ENCODE measurements at regions of chr3 and their contacts with region 1.

Region 1: DNA sequence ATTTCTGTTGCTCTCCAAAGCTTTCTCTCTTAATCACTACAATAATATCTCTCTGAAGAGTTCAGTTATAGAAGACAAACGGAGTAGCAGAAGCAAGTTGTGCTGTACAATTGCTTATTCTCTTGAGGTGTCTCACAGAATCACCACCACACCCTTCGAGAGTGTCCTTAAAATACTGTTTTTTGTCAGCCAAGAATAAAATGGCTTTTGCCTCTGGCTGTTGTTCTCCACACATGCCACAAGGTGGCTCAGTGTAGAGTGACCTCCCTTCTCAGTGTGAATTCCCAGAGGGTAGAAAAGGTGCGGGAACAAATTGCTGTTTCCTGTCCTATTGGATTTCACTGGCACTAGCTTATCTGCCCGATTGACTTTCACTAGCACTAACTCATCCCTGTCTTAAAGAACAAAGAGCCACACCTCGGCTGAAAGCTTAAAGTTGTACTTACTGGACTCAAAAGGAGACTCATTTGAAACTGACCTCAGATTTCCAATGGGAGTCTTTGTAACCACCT is 134.2 kb upstream of the SATB1 start:
- DNase-seq: peak; percentile 51
- H3K4me3 Mint-ChIP-seq: peak overlapping the region; percentile 14
- H3K27ac Mint-ChIP-seq: peak overlapping the region; percentile 93
- H3K4me1 Mint-ChIP-seq: peaks cover 80% of the 10 kb centered on the region
- H3K27me3 Mint-ChIP-seq: no peaks in the 10 kb centered on the region

Region 2: DNA sequence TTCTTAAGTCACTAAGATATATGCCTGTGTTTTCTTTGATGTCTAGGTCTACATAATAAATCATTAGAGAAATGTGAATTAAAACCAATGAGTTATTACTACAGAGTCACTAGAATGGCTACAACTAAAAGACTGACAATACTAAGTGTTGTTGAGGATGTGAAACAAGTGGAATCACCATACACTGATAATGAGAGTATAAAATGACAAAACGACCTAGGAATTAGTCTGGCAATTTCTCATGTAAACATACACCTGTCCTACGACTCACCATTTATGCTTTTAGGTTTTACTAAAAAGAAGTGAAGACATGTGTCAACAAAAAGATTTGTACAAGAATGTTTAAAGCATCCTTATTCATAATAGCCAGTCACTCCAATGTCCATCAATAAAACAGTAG is 59.1 kb before region 1 on chr3:
- CTCF ChIA-PET with region 1: interaction called, 3 read pairs
- POLR2A ChIA-PET with region 1: no interaction called
- intact Hi-C with region 1: loop called (anchors 1 kb)
- DNase-seq: no peak
- H3K4me3 Mint-ChIP-seq: no peak overlapping the region
- H3K27ac Mint-ChIP-seq: no peak overlapping the region
- H3K4me1 Mint-ChIP-seq: peaks cover 37% of the 10 kb centered on the region
- H3K27me3 Mint-ChIP-seq: no peaks in the 10 kb centered on the region

Region 3: GRCh38 chr3:18633020-18633419 is 73.6 kb after region 1 on chr3:
- CTCF ChIA-PET with region 1: no interaction called
- POLR2A ChIA-PET with region 1: no interaction called
- intact Hi-C with region 1: no loop called
- DNase-seq: no peak
- H3K4me3 Mint-ChIP-seq: no peak overlapping the region
- H3K27ac Mint-ChIP-seq: no peak overlapping the region
- H3K4me1 Mint-ChIP-seq: peaks cover 5% of the 10 kb centered on the region
- H3K27me3 Mint-ChIP-seq: no peaks in the 10 kb centered on the region

Region 4: GRCh38 chr3:18649666-18650363 is 90.4 kb after region 1 on chr3:
- CTCF ChIA-PET with region 1: interaction called, 16 read pairs
- POLR2A ChIA-PET with region 1: interaction called, 25 read pairs
- intact Hi-C with region 1: loop called (anchors 1 kb)
- DNase-seq: peak; percentile 76
- H3K4me3 Mint-ChIP-seq: peak overlapping the region; percentile 30
- H3K27ac Mint-ChIP-seq: peak overlapping the region; percentile 98
- H3K4me1 Mint-ChIP-seq: peaks cover 89% of the 10 kb centered on the region
- H3K27me3 Mint-ChIP-seq: no peaks in the 10 kb centered on the region

Region 5: DNA sequence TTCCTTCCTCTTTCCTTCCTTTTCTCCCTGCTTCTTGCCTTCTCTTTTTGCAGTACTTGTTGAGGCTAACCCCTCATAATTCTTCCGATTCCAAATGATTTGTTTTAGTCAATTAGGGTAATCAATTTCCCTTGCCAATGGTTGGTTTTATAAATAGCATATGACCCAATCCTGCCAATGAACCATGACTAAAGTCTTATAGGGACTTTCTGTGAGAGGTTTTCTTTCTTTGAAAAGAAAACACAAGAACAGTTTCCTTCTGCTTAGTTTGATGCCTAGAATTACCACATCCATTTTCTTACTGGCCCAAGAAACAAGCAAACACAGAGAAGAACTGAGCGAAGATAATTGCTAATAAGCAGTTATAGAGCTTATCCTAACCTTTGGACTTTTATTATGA is 158.2 kb after region 1 on chr3:
- CTCF ChIA-PET with region 1: interaction called, 11 read pairs
- POLR2A ChIA-PET with region 1: interaction called, 13 read pairs
- intact Hi-C with region 1: loop called (anchors 1 kb)
- DNase-seq: no peak
- H3K4me3 Mint-ChIP-seq: no peak overlapping the region
- H3K27ac Mint-ChIP-seq: peak overlapping the region; percentile 91
- H3K4me1 Mint-ChIP-seq: peaks cover 73% of the 10 kb centered on the region
- H3K27me3 Mint-ChIP-seq: no peaks in the 10 kb centered on the region

Region 6: DNA sequence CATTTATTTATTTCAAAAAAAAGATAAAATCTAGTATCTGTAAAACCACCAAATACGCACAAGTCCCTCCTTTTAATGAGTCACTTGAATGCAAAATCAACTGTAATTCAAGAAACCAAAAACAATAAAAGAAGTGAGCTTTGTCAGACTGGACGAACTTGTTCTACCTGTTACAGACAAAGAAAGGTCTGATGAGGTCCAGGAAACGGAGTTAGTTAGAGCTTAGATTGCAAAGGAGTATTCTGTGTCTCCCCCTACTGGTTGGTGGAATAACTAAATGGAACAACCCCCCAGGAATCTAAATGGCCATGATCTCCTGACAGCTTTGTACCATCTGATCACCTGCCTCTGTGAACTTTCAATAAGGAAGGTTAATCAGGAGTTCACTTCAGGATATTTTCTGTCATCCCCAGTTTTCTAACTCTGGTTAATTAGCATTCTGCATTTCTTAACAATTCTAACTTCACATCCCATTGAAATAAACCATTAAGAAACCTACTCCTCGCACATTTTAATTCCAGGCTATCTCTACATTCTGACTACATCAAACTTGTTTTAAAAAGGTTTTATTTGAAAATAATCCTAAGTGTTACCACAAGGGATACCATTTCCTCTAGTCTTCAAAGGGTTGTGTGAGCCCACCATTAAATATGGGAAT is 198.8 kb after region 1 on chr3:
- CTCF ChIA-PET with region 1: interaction called, 28 read pairs
- POLR2A ChIA-PET with region 1: interaction called, 5 read pairs
- intact Hi-C with region 1: loop called (anchors 1 kb)
- DNase-seq: no peak
- H3K4me3 Mint-ChIP-seq: no peak overlapping the region
- H3K27ac Mint-ChIP-seq: peak overlapping the region; percentile 78
- H3K4me1 Mint-ChIP-seq: peaks cover 39% of the 10 kb centered on the region
- H3K27me3 Mint-ChIP-seq: no peaks in the 10 kb centered on the region

Region 7: DNA sequence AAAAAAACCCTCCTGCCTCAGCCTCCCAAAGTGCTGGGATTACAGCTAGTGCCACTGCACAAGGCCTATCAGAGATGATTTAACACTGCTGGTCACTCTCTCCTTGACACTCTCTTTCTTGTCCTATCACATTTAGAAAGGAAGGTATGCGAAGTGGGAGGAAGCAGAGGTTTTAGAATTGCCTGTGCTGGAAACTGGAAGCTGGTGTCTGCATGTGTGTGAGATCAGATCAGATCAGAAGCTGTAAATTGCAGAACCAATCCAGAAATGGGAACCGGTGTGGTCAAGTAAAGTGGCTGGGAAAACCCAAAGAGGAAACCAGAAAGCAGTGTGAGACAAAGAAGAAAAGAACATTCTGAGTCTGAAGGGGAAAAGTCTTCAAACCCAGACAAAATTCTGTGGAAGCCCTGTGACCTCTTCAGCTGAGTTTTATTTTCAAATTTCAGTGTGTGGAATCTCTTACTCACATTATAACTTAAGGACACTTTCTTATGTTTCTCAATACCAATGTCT is 1371.8 kb after region 1 on chr3:
- CTCF ChIA-PET with region 1: no interaction called
- POLR2A ChIA-PET with region 1: no interaction called
- intact Hi-C with region 1: loop called (anchors 10 kb)
- DNase-seq: peak; percentile 84
- H3K4me3 Mint-ChIP-seq: peak overlapping the region; percentile 3
- H3K27ac Mint-ChIP-seq: peak overlapping the region; percentile 76
- H3K4me1 Mint-ChIP-seq: peaks cover 33% of the 10 kb centered on the region
- H3K27me3 Mint-ChIP-seq: peaks cover 12% of the 10 kb centered on the region